Activated CD8-positive, alpha-beta T cell treated with anti-CD3 and anti-CD28 coated beads for 36 hours (primary cell): ENCODE measurements at regions of chr17 and their contacts with region 1.

Region 1: GRCh38 chr17:76191896-76192295 is 48.4 kb downstream of the RNF157 start:
- DNase-seq: peak; percentile 65
- ATAC-seq: peak; percentile 82
- H3K4me3 Mint-ChIP-seq: peak overlapping the region; percentile 68
- H3K27ac Mint-ChIP-seq: peak overlapping the region; percentile 97
- H3K4me1 Mint-ChIP-seq: peaks cover 77% of the 10 kb centered on the region
- H3K27me3 Mint-ChIP-seq: no peaks in the 10 kb centered on the region
- CTCF ChIP-seq: no peak

Region 2: GRCh38 chr17:76147211-76148014 is 44.5 kb before region 1 on chr17:
- CTCF ChIA-PET with region 1: interaction called, 5 read pairs
- POLR2A ChIA-PET with region 1: interaction called, 11 read pairs
- intact Hi-C with region 1: no loop called
- DNase-seq: no peak
- ATAC-seq: no peak
- H3K4me3 Mint-ChIP-seq: no peak overlapping the region
- H3K27ac Mint-ChIP-seq: peak overlapping the region; percentile 94
- H3K4me1 Mint-ChIP-seq: peaks cover 70% of the 10 kb centered on the region
- H3K27me3 Mint-ChIP-seq: no peaks in the 10 kb centered on the region
- CTCF ChIP-seq: peak; percentile 16

Region 3: DNA sequence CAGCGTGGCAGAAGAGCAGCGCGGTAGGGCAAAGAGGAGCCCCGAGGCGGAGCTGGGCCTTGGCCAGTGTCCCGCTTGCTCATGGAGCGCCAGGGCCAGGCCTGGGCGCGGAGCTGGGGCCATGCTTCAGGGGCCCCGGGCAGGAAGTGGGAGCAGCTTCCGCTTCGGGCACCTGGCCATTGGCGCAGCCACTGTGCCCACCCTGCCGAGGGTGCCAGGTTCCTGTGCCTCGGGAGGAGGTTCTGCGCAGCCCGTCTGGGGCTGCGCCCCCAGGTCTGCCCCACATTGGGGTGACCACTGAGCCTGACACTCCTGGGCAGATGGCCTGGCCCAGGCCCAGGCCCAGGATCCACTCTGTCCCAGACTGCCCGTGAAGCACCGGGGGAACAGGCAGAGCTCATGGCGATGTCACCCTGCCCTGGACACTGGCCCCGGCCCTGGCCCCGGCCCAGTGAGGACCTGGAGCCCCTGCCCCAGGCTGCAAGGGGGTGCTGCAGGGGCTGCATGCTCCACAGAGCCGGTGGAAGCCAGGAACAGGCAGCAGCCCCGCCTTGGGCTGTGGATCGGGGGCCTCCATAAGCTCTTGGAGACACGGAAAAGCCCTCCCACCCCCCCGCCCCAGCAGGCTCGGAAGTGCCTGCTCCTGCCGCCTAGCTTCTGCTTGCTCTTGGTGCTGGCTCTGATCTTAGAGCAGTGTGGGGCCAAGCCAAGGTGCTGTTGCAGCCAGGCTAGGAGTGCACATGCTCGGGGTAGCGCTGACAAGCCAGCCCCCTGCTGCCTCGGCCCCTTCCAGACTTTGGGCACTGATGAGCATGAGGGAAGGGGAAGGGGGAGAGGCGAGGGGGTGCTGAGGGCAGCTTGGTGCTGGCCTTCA is 15.0 kb before region 1 on chr17:
- CTCF ChIA-PET with region 1: interaction called, 50 read pairs
- POLR2A ChIA-PET with region 1: interaction called, 59 read pairs
- intact Hi-C with region 1: no loop called
- DNase-seq: no peak
- ATAC-seq: no peak
- H3K4me3 Mint-ChIP-seq: no peak overlapping the region
- H3K27ac Mint-ChIP-seq: peak overlapping the region; percentile 90
- H3K4me1 Mint-ChIP-seq: peaks cover 45% of the 10 kb centered on the region
- H3K27me3 Mint-ChIP-seq: no peaks in the 10 kb centered on the region
- CTCF ChIP-seq: no peak

Region 4: GRCh38 chr17:76240461-76241203 is 48.7 kb after region 1 on chr17 and contains the start of gene RNF157:
- CTCF ChIA-PET with region 1: interaction called, 13 read pairs
- POLR2A ChIA-PET with region 1: interaction called, 32 read pairs
- intact Hi-C with region 1: loop called (anchors 5 kb)
- DNase-seq: peak; percentile 63
- ATAC-seq: peak; percentile 83
- H3K4me3 Mint-ChIP-seq: peak within 1 kb of the TSS; percentile 82
- H3K27ac Mint-ChIP-seq: peak within 1 kb of the TSS; percentile 93
- H3K4me1 Mint-ChIP-seq: peaks cover 60% of the 10 kb centered on the region
- H3K27me3 Mint-ChIP-seq: no peaks in the 10 kb centered on the region
- CTCF ChIP-seq: no peak
- total RNA-seq, gene RNF157: 37.2 to 44.5 TPM

Region 5: GRCh38 chr17:76246080-76247066 is 54.5 kb after region 1 on chr17:
- CTCF ChIA-PET with region 1: interaction called, 13 read pairs
- POLR2A ChIA-PET with region 1: interaction called, 700 read pairs
- intact Hi-C with region 1: loop called (anchors 5 kb)
- DNase-seq: peak; percentile 86
- ATAC-seq: peak; percentile 98
- H3K4me3 Mint-ChIP-seq: peak overlapping the region; percentile 44
- H3K27ac Mint-ChIP-seq: peak overlapping the region; percentile 96
- H3K4me1 Mint-ChIP-seq: peaks cover 56% of the 10 kb centered on the region
- H3K27me3 Mint-ChIP-seq: no peaks in the 10 kb centered on the region
- CTCF ChIP-seq: no peak